ENCODE measurements at regions of chr19 and their contacts with region 1.

Region 1: DNA sequence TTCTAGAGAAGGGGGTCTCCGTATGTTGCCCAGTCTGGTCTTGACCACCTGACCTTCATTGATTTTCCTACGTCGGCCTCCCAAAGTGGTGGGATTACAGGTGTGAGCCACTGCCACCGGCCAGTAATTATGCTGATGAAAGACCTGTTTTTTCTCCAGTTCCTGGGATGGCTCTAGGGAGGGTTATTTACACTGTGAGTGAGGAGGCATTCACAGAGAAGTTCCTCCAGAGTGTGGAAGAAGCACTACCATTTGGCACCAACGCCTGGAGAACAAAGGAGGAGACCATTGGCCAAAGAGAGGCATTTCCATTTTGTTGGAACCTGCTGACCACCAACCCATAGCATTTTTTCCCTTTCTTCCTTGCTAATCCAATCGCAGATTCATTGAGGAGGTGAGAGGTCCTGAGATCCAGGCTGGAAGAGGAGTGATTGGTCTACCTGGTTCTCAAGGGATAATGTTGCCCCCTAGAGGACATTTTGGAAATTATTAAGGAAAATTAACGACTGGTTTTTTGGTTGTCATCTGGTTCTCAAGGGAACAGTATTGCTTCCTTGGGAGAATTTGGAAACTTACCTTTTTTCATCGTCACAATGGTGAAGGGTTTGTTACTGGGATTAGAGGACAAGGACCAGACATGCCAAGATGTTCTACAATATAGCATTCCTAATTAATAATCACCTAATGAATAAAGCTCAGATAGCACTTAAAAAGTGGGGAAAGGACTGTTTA is 5.5 kb upstream of the SAE1 start:
- ATAC-seq: peak; percentile 58 to 81 (median 76)
- H3K4me3 ChIP-seq: no peak overlapping the region
- H3K27ac ChIP-seq: no peak overlapping the region
- H3K4me1 ChIP-seq: peaks cover 0 to 3% of the 10 kb centered on the region in 2 donors

Region 2: DNA sequence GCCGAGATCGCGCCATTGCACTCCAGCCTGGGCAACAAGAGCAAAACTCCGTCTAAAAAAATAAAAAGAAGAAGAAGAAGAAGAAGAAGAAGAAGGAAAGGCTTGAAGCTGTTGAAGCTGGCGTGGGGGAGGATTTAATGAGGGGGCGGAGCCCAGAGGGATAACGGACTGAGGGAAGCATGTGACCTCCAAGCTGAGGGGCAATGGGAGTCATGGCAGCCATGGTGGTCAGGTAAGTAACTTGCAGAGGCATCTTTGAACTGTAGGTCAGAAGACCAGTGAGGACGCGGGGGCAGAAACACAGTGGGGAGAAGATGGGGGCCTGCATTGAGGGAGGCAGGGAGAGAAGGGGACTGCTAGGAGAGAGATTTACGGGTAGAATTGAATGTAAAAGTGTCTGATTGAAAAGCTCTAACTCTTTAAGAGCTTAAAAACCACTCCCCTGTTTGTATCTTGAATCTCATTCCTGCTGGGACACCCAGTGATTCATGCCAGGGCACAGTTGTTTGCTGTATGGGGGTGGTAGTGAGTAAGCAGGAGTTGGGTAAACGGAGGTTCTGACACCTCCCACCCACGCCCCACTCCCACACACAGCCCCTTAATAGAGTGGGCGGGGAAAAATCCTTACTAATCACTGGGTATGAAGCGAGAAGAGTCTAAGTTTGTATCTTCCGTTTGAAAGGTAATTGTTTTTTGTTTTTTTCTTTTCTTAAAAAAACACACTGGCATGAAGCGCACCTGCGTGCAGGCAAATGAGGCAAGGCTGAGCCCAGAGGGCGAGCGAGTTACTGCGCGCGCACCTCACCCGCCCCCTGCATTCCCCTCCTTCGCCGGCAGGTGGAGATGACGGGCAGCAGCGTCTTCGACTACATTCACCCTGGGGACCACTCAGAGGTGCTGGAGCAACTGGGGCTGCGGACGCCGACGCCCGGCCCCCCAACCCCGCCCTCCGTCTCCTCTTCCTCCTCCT is 89.7 kb before region 1 on chr19:
- in situ Hi-C with region 1: loop called in 1 of 9 experiments (anchors 10 kb)
- ATAC-seq: peak; percentile 85 to 93 (median 91)
- H3K4me3 ChIP-seq: peak overlapping the region; percentile 31 to 43 (median 36)
- H3K27ac ChIP-seq: no peak overlapping the region
- H3K4me1 ChIP-seq: peaks cover 10 to 11% of the 10 kb centered on the region in 2 donors

Region 3: DNA sequence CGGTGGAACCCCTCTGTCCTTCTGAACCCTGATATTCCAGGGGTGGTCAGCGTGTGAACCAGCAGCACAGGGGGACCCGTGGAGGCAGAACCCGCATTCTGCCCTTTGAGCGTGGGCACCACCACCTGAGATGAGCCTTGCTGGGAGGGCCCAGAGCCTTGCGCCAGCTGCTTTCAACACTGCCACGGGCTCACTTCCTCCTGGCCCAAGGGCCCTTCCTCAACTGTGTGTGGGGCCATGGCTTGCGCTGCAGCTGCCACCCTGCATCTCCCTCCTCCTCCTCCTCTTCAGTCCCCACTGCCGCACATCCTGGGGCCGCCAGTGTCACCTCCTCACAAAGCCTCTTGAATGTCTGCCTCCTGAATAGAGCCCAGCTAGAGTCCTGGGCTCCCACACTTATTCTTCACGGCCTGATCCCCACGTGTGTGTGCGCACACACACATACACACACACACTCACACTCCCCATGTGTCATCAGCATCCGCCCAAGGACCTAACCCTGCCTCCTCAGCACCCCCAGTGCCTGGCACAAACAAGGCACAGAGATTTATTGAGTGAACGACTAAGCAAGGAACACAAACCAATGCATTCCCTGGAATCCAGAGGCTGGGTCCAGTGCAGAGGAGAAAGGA is 49.8 kb before region 1 on chr19:
- in situ Hi-C with region 1: loop called in 1 of 9 experiments (anchors 10 kb)
- ATAC-seq: peak in 2 of 8 experiments; percentile 5 to 6
- H3K4me3 ChIP-seq: no peak overlapping the region
- H3K27ac ChIP-seq: no peak overlapping the region
- H3K4me1 ChIP-seq: no peaks in the 10 kb centered on the region